MCF 10A (cell line): ENCODE measurements at regions of chr2 and their contacts with region 1.

Region 1: GRCh38 chr2:149597668-149598326 is 10.2 kb upstream of the MMADHC start:
- DNase-seq: peak; percentile 79
- H3K4me3 Mint-ChIP-seq: no peak overlapping the region
- H3K27ac Mint-ChIP-seq: no peak overlapping the region
- H3K4me1 Mint-ChIP-seq: peaks cover 12% of the 10 kb centered on the region
- H3K27me3 Mint-ChIP-seq: no peaks in the 10 kb centered on the region
- CTCF ChIP-seq: peak; percentile 57

Region 2: GRCh38 chr2:149579972-149580882 is 17.6 kb before region 1 on chr2:
- CTCF ChIA-PET with region 1: no interaction called
- POLR2A ChIA-PET with region 1: no interaction called
- intact Hi-C with region 1: no loop called
- DNase-seq: no peak
- H3K4me3 Mint-ChIP-seq: no peak overlapping the region
- H3K27ac Mint-ChIP-seq: no peak overlapping the region
- H3K4me1 Mint-ChIP-seq: peaks cover 27% of the 10 kb centered on the region
- H3K27me3 Mint-ChIP-seq: no peaks in the 10 kb centered on the region
- CTCF ChIP-seq: no peak

Region 3: DNA sequence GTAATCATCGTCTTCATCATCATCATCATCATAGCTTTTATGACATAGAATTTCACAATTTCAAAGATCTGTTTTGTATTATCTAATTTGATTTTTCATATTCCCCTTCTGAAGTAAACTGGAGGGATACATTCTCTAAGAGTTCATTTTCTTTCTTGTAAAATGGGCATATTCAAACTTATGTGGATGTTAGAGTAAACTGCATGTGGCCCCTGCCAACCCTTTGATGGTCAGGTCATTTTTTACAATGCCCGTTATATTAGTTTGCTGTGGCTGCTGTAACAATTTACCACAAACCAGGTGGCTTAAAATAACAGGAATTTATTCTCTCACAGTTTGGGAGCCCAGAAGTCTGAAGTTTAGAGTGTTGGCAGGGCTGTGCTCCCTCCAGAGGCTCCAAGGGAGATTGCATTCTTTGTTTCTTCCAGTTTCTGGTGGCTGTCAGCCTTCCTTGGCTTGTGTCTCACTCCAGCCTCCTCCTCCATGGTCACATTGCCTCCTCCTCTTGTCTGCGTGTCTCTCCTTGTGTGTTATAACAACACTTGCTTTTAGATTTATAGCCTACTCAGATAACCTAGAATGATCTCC is 117.3 kb after region 1 on chr2:
- CTCF ChIA-PET with region 1: interaction called, 17 read pairs
- POLR2A ChIA-PET with region 1: interaction called, 3 read pairs
- intact Hi-C with region 1: loop called (anchors 1 kb)
- DNase-seq: peak; percentile 63
- H3K4me3 Mint-ChIP-seq: no peak overlapping the region
- H3K27ac Mint-ChIP-seq: no peak overlapping the region
- H3K4me1 Mint-ChIP-seq: no peaks in the 10 kb centered on the region
- H3K27me3 Mint-ChIP-seq: no peaks in the 10 kb centered on the region
- CTCF ChIP-seq: peak; percentile 67

Region 4: DNA sequence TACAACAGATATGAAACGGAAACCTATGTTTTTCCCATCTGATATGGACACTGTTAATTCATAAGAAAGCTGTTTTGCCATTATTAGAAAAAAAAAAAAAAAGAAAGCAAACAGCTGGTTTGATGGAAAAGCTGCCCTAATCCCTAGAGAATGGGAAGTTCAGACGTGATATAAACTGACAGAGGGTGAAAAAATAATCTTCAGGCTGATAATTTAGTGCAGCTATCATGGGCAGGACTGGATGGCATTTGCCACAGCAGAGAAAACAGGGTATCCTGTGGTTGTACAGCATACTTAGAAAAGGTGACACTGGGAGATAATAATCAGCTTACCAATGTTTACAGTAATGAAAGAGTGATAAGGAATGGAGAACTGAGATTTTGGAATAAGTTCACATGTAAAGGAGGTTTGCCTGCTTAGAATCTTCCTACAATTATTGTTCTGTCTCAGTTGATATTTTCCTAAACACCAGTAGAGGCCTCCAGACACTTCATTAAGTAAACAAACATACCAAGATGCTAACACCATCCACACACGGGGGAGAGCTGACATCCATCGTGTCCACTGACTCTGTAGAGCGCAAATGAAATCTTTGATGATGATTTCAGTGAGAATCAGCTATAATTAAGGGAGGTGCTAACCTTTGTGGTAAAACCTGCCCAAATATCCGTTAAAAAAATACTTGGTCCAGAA is 201.4 kb after region 1 on chr2:
- CTCF ChIA-PET with region 1: interaction called, 12 read pairs
- POLR2A ChIA-PET with region 1: interaction called, 3 read pairs
- intact Hi-C with region 1: loop called (anchors 1 kb)
- DNase-seq: peak; percentile 42
- H3K4me3 Mint-ChIP-seq: no peak overlapping the region
- H3K27ac Mint-ChIP-seq: no peak overlapping the region
- H3K4me1 Mint-ChIP-seq: no peaks in the 10 kb centered on the region
- H3K27me3 Mint-ChIP-seq: no peaks in the 10 kb centered on the region
- CTCF ChIP-seq: peak; percentile 33

Region 5: GRCh38 chr2:150601280-150602038 is 1003.7 kb after region 1 on chr2:
- CTCF ChIA-PET with region 1: interaction called, 10 read pairs
- POLR2A ChIA-PET with region 1: no interaction called
- intact Hi-C with region 1: no loop called
- DNase-seq: no peak
- H3K4me3 Mint-ChIP-seq: no peak overlapping the region
- H3K27ac Mint-ChIP-seq: peak overlapping the region; percentile 63
- H3K4me1 Mint-ChIP-seq: peaks cover 7% of the 10 kb centered on the region
- H3K27me3 Mint-ChIP-seq: no peaks in the 10 kb centered on the region
- CTCF ChIP-seq: no peak

Region 6: GRCh38 chr2:150911766-150912280 is 1314.0 kb after region 1 on chr2:
- CTCF ChIA-PET with region 1: no interaction called
- POLR2A ChIA-PET with region 1: no interaction called
- intact Hi-C with region 1: loop called (anchors 5 kb)
- DNase-seq: peak; percentile 90
- H3K4me3 Mint-ChIP-seq: peak overlapping the region; percentile 51
- H3K27ac Mint-ChIP-seq: peak overlapping the region; percentile 70
- H3K4me1 Mint-ChIP-seq: peaks cover 21% of the 10 kb centered on the region
- H3K27me3 Mint-ChIP-seq: no peaks in the 10 kb centered on the region
- CTCF ChIP-seq: peak; percentile 17